Left cardiac atrium (tissue), 4 donors: ENCODE measurements at regions of chr19 and their contacts with region 1.

Region 1: GRCh38 chr19:45515081-45515624 is 7.9 kb downstream of the VASP start:
- DNase-seq: peak; percentile 48
- ATAC-seq: peak; percentile 29 to 67

Region 2: DNA sequence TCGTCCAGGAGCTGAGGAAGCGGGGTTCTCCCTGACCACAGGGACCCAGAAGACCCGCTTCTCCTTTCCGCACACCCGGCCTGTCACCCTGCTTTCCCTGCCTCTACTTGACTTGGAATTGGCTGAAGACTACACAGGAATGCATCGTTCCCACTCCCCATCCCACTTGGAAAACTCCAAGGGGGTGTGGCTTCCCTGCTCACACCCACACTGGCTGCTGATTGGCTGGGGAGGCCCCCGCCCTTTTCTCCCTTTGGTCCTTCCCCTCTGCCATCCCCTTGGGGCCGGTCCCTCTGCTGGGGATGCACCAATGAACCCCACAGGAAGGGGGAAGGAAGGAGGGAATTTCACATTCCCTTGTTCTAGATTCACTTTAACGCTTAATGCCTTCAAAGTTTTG is 11.0 kb after region 1 on chr19:
- intact Hi-C with region 1: no loop called
- DNase-seq: peak; percentile 72
- ATAC-seq: peak; percentile 34 to 76

Region 3: GRCh38 chr19:45584332-45585157 is 69.4 kb after region 1 on chr19 and contains the start of gene OPA3:
- intact Hi-C with region 1: loop called in 1 of 2 experiments (anchors 5 kb)
- DNase-seq: peak; percentile 100
- ATAC-seq: peak; percentile 97 to 98
- total RNA-seq, gene OPA3: 19.1 to 27.1 TPM

Region 4: DNA sequence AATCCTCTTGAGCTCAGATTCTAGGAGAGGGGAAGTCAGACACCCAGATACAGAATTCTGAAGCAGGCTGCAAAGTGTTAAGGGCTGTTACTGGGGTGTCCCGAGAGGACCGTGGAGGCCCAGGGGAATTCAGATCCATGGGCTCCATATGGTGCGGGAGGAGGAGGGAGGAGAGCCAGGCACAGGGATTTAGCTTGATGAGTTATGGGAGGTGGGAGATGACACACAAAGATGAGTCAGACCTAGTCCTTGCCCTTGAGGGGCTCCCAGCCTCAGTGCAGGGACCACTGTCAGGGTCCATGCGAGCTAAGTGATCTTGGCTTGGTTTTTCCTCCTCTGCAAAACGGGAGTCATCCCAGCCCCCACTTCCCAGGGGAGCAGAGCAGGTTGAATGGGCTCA is 138.5 kb after region 1 on chr19:
- intact Hi-C with region 1: no loop called
- DNase-seq: no peak
- ATAC-seq: no peak

Region 5: DNA sequence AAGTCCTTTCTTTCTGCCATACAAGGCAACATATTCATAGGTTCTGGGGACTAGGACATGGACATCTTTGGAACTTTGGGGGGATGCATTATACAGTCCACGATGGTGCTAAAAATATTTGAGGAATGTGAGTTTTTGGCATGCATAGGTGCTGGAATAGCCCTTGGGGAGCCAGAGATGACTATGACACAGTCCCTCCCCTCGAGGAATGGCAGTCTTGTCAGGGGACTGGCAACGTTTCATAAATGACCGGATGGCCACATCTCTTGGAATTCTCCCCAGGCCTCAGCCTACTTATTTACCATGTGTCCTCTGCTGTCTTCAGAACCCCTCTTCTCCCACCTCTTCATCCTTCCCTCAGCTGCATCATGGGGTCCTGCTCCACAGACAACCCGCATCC is 231.7 kb after region 1 on chr19:
- intact Hi-C with region 1: no loop called
- DNase-seq: no peak
- ATAC-seq: no peak